Cardiac septum (tissue), 1 donor: ENCODE measurements at regions of chr6 and their contacts with region 1.

Region 1: DNA sequence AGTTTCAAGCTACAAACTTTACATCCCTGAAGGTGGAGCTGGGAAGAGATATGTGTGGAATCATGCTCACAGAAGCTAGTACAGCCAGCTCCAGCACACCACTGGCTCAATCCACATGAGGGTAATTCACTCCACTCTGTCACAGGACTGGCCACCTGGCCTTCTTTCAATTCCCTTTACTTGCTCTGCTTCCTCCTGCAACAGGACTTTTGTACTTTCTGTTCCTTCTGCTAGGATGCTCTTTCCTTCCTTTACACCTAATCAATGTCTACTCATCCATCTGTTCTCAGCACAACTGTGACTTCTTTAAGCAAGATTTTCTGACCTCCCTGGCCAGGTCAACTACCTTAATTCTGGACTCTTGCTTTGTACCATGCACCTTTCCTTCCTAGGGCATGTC is 39.4 kb upstream of the MYB start:
- DNase-seq: no peak

Region 2: DNA sequence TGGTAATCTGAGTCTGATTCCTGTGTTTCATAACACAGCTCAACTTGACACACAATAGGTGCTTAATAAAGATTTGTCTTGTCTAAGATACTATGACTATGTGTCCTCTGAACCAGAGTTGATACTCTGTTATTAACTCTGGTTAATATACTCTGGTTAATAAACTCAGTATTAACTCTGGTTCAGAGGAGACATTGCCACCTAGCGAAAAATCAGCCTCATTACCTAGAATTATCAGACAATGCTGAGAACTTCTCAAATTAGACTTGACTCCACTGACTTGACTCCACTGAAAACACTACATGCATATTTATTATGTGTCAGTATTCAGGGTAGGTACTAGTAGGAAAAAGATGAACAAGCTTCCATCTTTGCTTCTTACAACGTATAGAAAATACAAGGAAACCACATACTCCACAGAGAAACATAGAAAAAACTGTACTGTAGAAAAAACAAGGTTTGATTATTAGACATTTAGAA is 282.0 kb after region 1 on chr6:
- intact Hi-C with region 1: loop called (anchors 5 kb)
- DNase-seq: no peak